ENCODE measurements at regions of chrX and their contacts with region 1.

Region 1: DNA sequence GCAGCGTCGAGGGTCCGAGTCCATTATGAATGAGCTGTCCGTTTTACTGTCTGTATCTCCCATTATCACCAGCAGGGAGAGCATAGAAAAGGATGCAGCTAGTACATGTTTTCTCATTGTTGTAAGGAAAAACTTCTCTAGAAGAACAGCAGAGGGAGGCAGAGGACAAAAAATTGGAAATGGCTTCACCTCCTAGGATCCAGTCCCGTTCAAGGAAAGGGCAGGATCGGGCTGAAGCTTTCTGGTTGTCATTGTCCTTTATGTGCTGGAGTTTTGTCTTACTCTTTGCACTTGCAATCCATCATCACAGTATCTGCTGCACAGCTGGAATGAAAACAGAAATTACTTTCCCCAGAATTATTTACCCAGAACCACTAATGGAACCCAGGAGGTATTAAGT is 14.7 kb downstream of the NDP start:
- DNase-seq: no peak
- H3K4me3 ChIP-seq: no peak overlapping the region
- H3K27ac ChIP-seq: no peak overlapping the region
- H3K4me1 ChIP-seq: no peaks in the 10 kb centered on the region
- H3K27me3 ChIP-seq: no peaks in the 10 kb centered on the region
- CTCF ChIP-seq: peak; percentile 61 to 83 (median 70)
- EP300 ChIP-seq: no peak
- POLR2A ChIP-seq: no peak

Region 2: GRCh38 chrX:44025555-44025954 is 67.0 kb after region 1 on chrX:
- intact Hi-C with region 1: loop called (anchors 5 kb)
- DNase-seq: no peak
- H3K4me3 ChIP-seq: no peak overlapping the region
- H3K27ac ChIP-seq: no peak overlapping the region
- H3K4me1 ChIP-seq: no peaks in the 10 kb centered on the region
- H3K27me3 ChIP-seq: peaks cover 0 to 3% (median 0%) of the 10 kb centered on the region in 3 donors
- CTCF ChIP-seq: no peak
- EP300 ChIP-seq: no peak
- POLR2A ChIP-seq: no peak

Region 3: DNA sequence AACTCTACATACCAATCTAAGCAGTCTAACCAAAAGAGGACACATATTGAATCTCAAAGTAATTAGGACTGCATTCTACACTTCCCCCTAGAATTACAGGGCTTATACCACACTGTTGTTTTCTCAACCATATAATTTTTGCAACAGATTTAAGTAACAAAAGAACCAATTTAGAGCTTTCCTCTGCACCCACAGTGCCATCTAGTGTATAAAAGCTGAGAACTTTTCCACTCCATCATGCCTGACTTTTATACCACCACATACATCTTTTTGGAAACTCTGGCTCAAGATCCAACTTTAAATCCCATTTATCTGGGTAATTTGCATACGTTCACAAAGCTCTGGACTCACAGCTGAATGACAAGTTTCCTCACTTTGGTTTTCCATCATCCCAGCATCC is 285.5 kb after region 1 on chrX:
- intact Hi-C with region 1: loop called (anchors 2 kb)
- DNase-seq: no peak
- H3K4me3 ChIP-seq: no peak overlapping the region
- H3K27ac ChIP-seq: no peak overlapping the region
- H3K4me1 ChIP-seq: no peaks in the 10 kb centered on the region
- H3K27me3 ChIP-seq: no peaks in the 10 kb centered on the region
- CTCF ChIP-seq: peak in 2 of 4 experiments; percentile 38 to 39
- EP300 ChIP-seq: no peak
- POLR2A ChIP-seq: no peak

Region 4: DNA sequence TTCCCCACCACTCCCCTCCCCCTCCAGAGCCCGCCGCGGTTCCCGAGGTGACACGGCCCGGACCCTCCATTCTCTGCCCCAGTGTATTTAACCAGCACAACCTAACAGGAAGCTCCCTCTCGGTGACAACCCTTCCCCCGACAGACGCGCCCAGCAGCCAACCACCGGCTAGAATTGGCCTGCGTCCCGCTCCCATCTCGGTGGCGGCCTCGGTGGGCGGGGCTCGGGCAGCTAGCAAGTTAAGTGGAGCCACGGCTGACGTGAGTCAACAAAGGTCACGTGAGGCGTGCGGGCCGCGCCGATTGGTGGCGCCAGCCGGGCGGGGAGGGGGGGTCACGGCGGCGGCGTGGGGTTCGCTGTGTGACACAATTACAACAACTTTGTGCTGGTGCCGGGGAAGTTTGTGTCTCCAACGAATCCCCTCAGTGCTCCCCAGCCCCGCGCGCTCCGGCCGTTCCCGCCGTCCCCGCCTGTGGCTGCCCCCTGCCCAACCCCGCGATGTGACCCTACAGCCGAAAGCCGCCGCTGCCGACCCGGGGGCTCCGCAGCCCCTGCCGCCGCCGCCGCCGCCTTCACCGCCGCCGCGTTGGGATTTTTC is 914.4 kb after region 1 on chrX and contains the start of gene KDM6A:
- intact Hi-C with region 1: loop called (anchors 2 kb)
- DNase-seq: peak; percentile 100
- H3K4me3 ChIP-seq: peak within 1 kb of the TSS; percentile 75 to 100 (median 86)
- H3K27ac ChIP-seq: peak within 1 kb of the TSS; percentile 97 to 100 (median 99)
- H3K4me1 ChIP-seq: peaks cover 0 to 33% (median 6%) of the 10 kb centered on the region in 4 donors
- H3K27me3 ChIP-seq: no peaks in the 10 kb centered on the region
- CTCF ChIP-seq: no peak
- EP300 ChIP-seq: no peak
- POLR2A ChIP-seq: peak in 1 of 2 donors; percentile 52
- total RNA-seq, gene KDM6A: 17.9 to 35.7 (median 25.6) TPM

Region 5: GRCh38 chrX:45077748-45078424 is 1119.4 kb after region 1 on chrX:
- intact Hi-C with region 1: loop called (anchors 5 kb)
- DNase-seq: no peak
- H3K4me3 ChIP-seq: no peak overlapping the region
- H3K27ac ChIP-seq: no peak overlapping the region
- H3K4me1 ChIP-seq: no peaks in the 10 kb centered on the region
- H3K27me3 ChIP-seq: no peaks in the 10 kb centered on the region
- CTCF ChIP-seq: no peak
- EP300 ChIP-seq: no peak
- POLR2A ChIP-seq: no peak

Measured in sigmoid colon (tissue), 7 donors.